Posterior vena cava (tissue), 2 donors: ENCODE measurements at regions of chr3 and their contacts with region 1.

Region 1: DNA sequence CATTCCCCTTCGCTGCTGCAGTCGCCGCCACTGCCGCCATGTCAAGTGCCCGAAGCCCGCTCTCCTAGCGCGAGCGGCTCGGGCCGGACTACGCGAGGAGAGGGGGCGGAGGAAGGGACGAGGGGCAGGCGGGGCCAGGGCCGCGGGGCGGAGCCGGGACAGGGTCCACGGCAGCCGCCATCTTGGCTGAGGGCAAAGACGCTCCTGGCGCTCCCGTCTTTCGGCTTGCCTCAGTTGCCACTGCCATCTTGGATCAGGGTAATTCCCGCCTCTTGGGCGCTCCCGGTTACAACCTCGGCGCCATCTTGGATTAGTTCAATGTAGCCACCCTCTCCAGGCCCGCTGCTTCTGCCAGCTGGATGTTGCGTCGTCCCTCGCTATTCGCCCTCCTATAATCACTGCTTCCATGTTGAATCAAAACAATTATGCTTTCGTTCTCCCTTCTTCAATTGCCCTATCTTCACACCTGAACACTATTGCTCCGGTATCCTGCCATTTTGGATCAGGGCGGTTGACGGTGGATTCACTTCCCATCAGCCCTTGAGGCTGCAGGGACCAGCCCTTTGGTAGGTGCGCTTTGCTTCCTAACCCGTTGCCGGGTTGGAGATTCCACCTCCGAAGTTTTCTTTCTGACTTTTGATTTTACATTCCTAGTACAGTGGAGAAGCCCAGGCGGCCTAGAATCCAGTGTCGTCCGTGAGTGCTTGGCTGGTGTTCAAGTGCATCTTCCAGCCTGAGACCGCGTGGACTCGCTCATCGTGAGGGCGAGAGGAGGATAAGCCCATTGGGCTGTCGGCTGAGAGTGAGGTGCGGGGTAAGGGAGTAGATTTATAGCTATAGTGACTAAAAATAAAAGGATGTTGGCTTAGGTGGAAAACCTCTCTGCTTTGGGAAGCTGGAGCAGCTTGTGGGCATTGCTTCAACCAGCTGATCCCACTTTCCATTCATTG is at the start of gene HACD2:
- DNase-seq: peak; percentile 98
- total RNA-seq, gene HACD2: 16.5 to 19.9 TPM

Region 2: GRCh38 chr3:123447749-123448517 is 137.3 kb before region 1 on chr3:
- intact Hi-C with region 1: no loop called
- DNase-seq: no peak

Region 3: GRCh38 chr3:123602325-123602724 is 17.1 kb after region 1 on chr3:
- intact Hi-C with region 1: loop called in 1 of 2 experiments (anchors 2 kb)
- DNase-seq: no peak